Heart left ventricle (tissue), 16 donors: ENCODE measurements at regions of chr2 and their contacts with region 1.

Region 1: DNA sequence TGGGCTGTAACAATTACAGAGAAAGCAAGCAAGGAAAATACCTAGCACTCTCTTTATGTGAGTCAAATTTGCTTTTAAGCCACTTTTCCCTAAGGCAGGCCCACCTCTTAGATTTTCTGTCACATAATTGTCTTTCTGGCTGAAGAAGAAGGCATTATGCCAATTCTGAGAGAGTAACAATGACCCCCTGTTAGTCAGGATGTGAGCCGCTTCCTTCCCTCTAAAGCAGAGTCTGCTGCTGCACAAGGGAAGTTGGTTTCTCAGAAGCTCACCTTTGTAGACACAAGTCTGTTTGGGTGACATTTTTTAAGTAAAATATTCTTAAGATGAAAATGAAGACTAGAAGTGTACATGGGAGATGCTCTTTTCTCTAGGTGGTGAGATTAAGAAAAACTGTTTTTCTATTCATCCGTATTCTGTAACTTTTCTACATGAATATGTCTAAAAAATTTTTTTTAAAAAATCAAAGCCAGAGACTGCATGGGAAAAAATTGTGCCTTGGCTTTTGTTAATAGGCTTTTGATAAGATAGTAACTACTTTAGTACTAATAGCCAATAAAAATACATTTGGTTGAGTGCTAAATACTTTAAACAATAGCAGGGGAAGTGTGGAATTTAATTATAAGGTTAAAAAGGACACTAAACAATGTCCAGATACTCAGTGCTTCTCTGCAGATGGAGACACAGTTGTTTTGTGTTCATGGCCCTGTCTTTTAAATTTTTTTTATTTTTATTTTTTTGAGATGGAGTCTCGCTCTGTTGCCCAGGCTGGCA is 33.4 kb upstream of the VPS54 start:
- DNase-seq: peak in 2 of 5 donors; percentile 30 to 37
- ATAC-seq: peak; percentile 72 to 91 (median 74)
- H3K4me3 ChIP-seq: no peak overlapping the region
- H3K27ac ChIP-seq: peak overlapping the region; percentile 14 to 84 (median 74)
- H3K4me1 ChIP-seq: peaks cover 0 to 30% (median 5%) of the 10 kb centered on the region in 12 donors
- H3K27me3 ChIP-seq: no peaks in the 10 kb centered on the region
- CTCF ChIP-seq: no peak
- POLR2A ChIP-seq: no peak

Region 2: GRCh38 chr2:64133828-64134227 is 81.2 kb after region 1 on chr2:
- intact Hi-C with region 1: loop called in 1 of 10 experiments (anchors 5 kb)
- DNase-seq: no peak
- ATAC-seq: no peak
- H3K4me3 ChIP-seq: no peak overlapping the region
- H3K27ac ChIP-seq: peak overlapping the region in 1 of 12 donors; percentile 3
- H3K4me1 ChIP-seq: peaks cover 0 to 81% (median 18%) of the 10 kb centered on the region in 12 donors
- H3K27me3 ChIP-seq: no peaks in the 10 kb centered on the region
- CTCF ChIP-seq: no peak
- POLR2A ChIP-seq: no peak

Region 3: DNA sequence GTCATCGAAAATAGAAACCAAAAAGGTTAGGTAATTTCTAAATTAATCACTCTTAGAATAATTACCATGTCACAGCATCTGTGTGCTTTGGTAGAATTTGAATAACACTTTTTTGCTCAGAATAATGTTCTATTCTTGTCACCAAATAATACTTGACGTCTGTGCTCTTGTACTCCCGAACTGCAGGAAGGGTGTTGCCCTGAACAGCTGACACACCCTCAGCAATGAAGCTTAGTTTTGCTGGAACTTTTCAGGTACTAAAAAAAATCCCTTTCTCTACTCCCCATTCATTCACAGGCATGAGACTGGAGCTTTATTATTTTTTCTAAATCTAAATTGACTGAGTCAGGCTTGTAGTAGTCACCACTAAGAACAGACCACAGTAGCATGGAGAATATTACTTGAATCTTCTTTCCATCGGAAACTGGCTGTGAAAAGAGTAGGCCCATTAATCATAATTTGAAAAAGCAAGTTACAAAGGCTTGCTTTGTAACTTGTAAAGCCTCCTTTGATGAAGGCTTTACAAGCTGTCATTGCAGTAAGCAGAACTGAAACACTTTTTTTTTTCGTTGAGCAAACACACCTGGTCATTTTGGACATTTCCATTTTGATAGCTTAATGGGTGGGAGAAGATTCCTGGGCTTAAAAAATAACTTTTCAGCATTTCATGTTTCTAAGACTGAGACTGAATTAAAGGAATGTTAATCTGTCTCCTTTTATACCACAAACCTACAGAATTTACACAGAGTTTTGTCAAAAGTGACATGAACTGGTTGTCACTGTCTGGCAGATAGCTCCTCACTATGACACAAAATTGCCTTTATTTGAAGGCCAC is 161.8 kb after region 1 on chr2:
- intact Hi-C with region 1: loop called in 1 of 10 experiments (anchors 2 kb)
- DNase-seq: peak in 3 of 5 donors; percentile 36 to 44 (median 38)
- ATAC-seq: peak; percentile 81 to 96 (median 87)
- H3K4me3 ChIP-seq: no peak overlapping the region
- H3K27ac ChIP-seq: peak overlapping the region; percentile 37 to 88 (median 78)
- H3K4me1 ChIP-seq: peaks cover 0 to 54% (median 15%) of the 10 kb centered on the region in 12 donors
- H3K27me3 ChIP-seq: no peaks in the 10 kb centered on the region
- CTCF ChIP-seq: no peak
- POLR2A ChIP-seq: peak in 1 of 2 donors; percentile 19

Region 4: GRCh38 chr2:64228126-64228678 is 175.5 kb after region 1 on chr2:
- intact Hi-C with region 1: loop called in 3 of 10 experiments (anchors 5 to 10 kb)
- DNase-seq: peak; percentile 86 to 94 (median 87)
- ATAC-seq: peak; percentile 94 to 99 (median 98)
- H3K4me3 ChIP-seq: peak overlapping the region; percentile 14 to 62 (median 50)
- H3K27ac ChIP-seq: peak overlapping the region; percentile 21 to 88 (median 78)
- H3K4me1 ChIP-seq: peaks cover 0 to 27% (median 15%) of the 10 kb centered on the region in 12 donors
- H3K27me3 ChIP-seq: no peaks in the 10 kb centered on the region
- CTCF ChIP-seq: peak in 3 of 12 donors; percentile 10 to 16 (median 13)
- POLR2A ChIP-seq: peak in 1 of 2 donors; percentile 62

Region 5: DNA sequence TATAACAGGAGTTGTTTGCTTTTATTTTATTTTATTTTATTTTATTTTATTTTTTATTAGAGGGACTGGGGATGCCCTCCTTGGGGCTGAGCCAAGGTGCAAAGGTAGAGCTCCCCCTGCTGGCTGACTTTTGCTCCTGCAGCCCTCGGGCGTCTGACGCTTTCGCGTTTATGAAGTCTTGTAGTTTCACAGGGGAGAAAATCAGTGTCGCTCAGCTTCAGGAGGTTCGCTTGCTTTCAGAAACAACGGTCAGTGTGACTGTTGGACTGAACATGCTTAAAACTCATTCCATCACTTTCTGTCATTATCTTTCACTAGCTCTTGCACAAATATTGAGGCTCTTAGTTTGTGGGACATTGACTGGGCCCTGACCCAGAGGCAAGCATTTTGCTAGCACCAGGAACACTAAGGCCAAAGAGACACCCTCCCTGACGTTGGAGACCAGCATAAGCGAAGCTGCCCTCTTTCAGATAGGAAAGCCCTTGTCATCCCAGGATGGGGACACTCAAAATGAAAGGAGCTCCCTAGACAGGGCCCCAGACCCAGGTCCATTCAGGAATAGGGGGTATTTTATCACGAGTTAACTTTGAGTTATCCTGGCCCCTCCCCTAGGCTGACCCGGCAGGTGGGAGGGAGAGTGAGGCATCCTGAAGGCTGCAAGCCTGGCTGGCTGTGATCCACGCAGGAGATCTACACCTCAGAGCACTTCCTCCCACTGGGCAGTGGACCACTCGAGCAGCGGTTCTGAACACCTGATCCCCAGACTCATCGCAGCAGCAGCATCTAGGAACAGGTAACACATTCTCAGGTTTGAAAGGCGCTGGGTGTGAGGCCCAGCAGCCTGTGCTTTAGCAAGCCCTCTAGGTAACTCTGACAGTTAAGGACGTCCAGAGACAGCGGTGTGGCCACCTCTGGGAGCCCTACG is 435.7 kb after region 1 on chr2:
- intact Hi-C with region 1: loop called in 9 of 10 experiments (anchors 5 to 10 kb)
- DNase-seq: peak; percentile 52 to 84 (median 68)
- ATAC-seq: peak; percentile 48 to 76 (median 64)
- H3K4me3 ChIP-seq: no peak overlapping the region
- H3K27ac ChIP-seq: no peak overlapping the region
- H3K4me1 ChIP-seq: peaks cover 0 to 25% (median 8%) of the 10 kb centered on the region in 12 donors
- H3K27me3 ChIP-seq: peaks cover 0 to 3% (median 0%) of the 10 kb centered on the region in 9 donors
- CTCF ChIP-seq: peak; percentile 94 to 99 (median 98)
- POLR2A ChIP-seq: no peak

Region 6: GRCh38 chr2:64865073-64865830 is 812.6 kb after region 1 on chr2:
- intact Hi-C with region 1: loop called in 2 of 10 experiments (anchors 10 kb)
- DNase-seq: peak; percentile 68 to 82 (median 71)
- ATAC-seq: peak; percentile 62 to 90 (median 80)
- H3K4me3 ChIP-seq: peak overlapping the region; percentile 47 to 88 (median 82)
- H3K27ac ChIP-seq: peak overlapping the region; percentile 77 to 94 (median 90)
- H3K4me1 ChIP-seq: peaks cover 0 to 58% (median 6%) of the 10 kb centered on the region in 12 donors
- H3K27me3 ChIP-seq: no peaks in the 10 kb centered on the region
- CTCF ChIP-seq: peak; percentile 28 to 100 (median 81)
- POLR2A ChIP-seq: no peak